Dorsolateral prefrontal cortex (tissue), 120 donors: ENCODE measurements at regions of chr2 and their contacts with region 1.

Region 1: DNA sequence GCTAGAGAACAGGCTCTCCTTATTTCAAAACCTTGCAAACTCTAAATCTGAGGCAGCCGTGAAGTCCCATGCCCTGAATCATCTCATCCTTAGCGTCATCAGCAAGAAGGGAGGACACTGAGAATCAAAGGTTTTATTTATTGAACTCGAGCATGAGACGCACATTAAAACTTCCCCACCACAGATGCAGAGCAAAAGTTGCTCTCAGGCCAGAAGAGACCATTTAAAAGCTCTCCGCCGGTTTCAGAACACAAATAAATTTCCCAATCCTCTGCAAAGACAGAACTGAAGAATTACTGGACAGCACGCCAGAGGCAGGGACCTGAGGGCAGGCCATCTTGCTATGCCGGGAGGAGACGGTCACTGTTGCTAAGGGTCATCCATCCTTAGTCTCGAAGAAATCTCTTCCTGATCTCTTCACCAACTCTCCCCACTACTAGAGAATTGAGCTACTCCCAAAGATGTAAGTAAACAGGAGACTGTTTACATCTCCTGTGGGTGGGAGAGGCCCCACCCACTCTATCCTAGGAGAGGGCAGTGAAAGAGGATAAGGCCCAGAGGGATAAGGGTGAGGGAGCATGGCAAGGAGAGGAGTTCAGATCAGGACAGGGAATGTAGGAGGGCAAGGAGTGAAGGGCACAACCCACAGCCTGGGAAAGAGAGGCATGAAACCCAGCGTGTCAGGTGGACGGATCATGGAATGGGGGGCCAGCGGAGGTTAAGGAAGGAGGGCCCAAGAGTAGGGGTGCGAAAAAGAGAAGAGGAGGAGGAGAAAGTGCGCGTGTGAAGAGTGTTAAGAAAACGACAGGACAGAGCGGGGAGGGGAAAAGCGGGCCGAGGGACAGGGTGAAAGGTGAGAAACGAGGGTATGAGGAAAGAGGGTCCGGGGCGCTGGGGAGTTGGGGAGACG is 1.1 kb downstream of the AMMECR1L start:
- DNase-seq: no peak
- H3K4me3 ChIP-seq: peak overlapping the region; percentile 31 to 80 (median 71)
- H3K27ac ChIP-seq: peak overlapping the region in 25 of 59 donors; percentile 22 to 96 (median 58)
- H3K27me3 ChIP-seq: no peaks in the 10 kb centered on the region
- CTCF ChIP-seq: no peak

Region 2: GRCh38 chr2:127857265-127857808 is 27.4 kb before region 1 on chr2:
- intact Hi-C with region 1: loop called (anchors 2 kb)
- DNase-seq: no peak
- H3K4me3 ChIP-seq: peak overlapping the region; percentile 63 to 99 (median 94)
- H3K27ac ChIP-seq: peak overlapping the region in 51 of 59 donors; percentile 1 to 90 (median 76)
- H3K27me3 ChIP-seq: no peaks in the 10 kb centered on the region
- CTCF ChIP-seq: no peak

Region 3: GRCh38 chr2:128090945-128091725 is 206.4 kb after region 1 on chr2 and contains the start of gene UGGT1:
- intact Hi-C with region 1: loop called (anchors 5 kb)
- DNase-seq: peak; percentile 89 to 97 (median 94)
- H3K4me3 ChIP-seq: peak within 1 kb of the TSS; percentile 60 to 100 (median 94)
- H3K27ac ChIP-seq: peak within 1 kb of the TSS; percentile 13 to 93 (median 80)
- H3K27me3 ChIP-seq: no peaks in the 10 kb centered on the region
- CTCF ChIP-seq: peak in 38 of 56 donors; percentile 9 to 57 (median 34)
- total RNA-seq, gene UGGT1: 23.5 to 46.5 (median 33.1) TPM